Brain microvascular endothelial cell (primary cell): ENCODE measurements at regions of chr3 and their contacts with region 1.

Region 1: GRCh38 chr3:100893590-100893989 is 99.6 kb downstream of the ABI3BP start:
- DNase-seq: peak; percentile 66
- H3K4me3 ChIP-seq: no peak overlapping the region
- H3K27ac ChIP-seq: no peak overlapping the region
- H3K27me3 ChIP-seq: no peaks in the 10 kb centered on the region
- CTCF ChIP-seq: peak; percentile 88

Region 2: DNA sequence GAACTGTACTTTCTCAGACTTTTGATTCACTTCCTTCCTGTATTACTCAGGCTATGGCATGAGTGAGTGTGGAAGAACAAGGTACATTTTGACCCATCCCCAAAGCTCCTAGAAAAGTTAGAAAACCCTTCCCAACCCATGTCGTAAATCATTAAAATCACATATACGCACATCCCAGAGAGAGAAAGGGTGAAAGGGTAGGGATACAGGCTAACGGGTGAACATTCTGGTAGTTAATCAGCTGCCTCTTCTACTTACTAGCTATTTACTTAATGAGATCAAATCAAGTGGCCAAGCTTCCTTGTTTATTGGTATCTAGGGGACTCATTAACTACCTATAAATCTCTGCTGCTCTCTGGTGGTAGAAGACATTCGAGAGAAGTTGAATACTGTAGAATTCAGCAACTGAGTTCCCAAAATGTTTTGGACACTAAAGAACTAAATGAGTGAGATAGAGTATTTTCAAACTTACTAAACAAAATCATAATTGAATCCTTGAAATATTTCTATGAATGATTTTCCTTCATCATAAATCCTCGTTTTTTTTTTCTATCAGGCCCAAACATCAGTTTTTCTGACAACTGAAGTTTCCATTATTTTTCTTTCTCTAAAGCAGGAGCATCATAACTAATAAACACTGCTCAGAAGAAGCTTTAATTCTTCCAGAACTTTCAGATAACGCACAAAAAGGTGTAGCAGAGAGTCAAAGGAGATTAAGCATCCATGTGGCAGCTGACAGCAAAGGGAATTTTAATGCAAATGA is 302.5 kb after region 1 on chr3:
- in situ Hi-C with region 1: loop called (anchors 10 kb)
- DNase-seq: peak; percentile 52
- H3K4me3 ChIP-seq: no peak overlapping the region
- H3K27ac ChIP-seq: peak overlapping the region; percentile 38
- H3K27me3 ChIP-seq: no peaks in the 10 kb centered on the region
- CTCF ChIP-seq: peak; percentile 50